ENCODE measurements at regions of chr5 and their contacts with region 1.

Region 1: GRCh38 chr5:137629646-137630045 is 106.2 kb downstream of the KLHL3 start:
- DNase-seq: peak in 2 of 5 donors; percentile 32 to 44
- H3K4me3 ChIP-seq: no peak overlapping the region
- H3K4me3 Mint-ChIP-seq: no peak overlapping the region
- H3K27ac ChIP-seq: no peak overlapping the region
- H3K27ac Mint-ChIP-seq: peak overlapping the region in 1 of 8 donors; percentile 39
- H3K4me1 ChIP-seq: no peaks in the 10 kb centered on the region
- H3K4me1 Mint-ChIP-seq: no peaks in the 10 kb centered on the region
- H3K27me3 ChIP-seq: no peaks in the 10 kb centered on the region
- H3K27me3 Mint-ChIP-seq: no peaks in the 10 kb centered on the region

Region 2: GRCh38 chr5:137641148-137641547 is 11.5 kb after region 1 on chr5:
- CTCF ChIA-PET with region 1: interaction called, 17 read pairs
- POLR2A ChIA-PET with region 1: interaction called, 3 read pairs
- DNase-seq: no peak
- H3K4me3 ChIP-seq: no peak overlapping the region
- H3K4me3 Mint-ChIP-seq: no peak overlapping the region
- H3K27ac ChIP-seq: no peak overlapping the region
- H3K27ac Mint-ChIP-seq: peak overlapping the region in 1 of 8 donors; percentile 87
- H3K4me1 ChIP-seq: no peaks in the 10 kb centered on the region
- H3K4me1 Mint-ChIP-seq: no peaks in the 10 kb centered on the region
- H3K27me3 ChIP-seq: no peaks in the 10 kb centered on the region
- H3K27me3 Mint-ChIP-seq: no peaks in the 10 kb centered on the region

Region 3: DNA sequence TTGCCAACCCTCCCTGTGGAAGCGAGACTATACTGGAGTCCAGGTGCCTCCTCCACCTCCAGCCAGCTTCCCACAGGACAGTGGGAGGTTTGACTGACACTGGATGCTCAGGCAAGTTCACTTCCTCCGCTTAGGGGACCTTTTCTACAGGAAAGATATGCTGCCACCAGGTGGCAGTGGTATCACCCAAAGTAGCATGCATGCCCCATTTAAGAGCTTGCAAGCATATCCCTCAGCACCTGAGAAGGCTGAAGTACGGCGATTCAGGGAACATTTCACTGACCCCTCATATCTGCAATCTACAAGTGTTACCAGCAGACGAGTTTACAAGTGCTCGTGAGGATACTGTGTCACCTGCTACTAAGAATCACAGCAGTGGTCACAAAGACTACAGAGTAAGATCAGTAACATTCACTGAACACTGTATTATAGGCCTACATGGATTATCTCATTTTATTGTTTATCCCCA is 30.7 kb after region 1 on chr5:
- CTCF ChIA-PET with region 1: interaction called, 10 read pairs
- POLR2A ChIA-PET with region 1: no interaction called
- DNase-seq: peak; percentile 46 to 76 (median 47)
- H3K4me3 ChIP-seq: no peak overlapping the region
- H3K4me3 Mint-ChIP-seq: no peak overlapping the region
- H3K27ac ChIP-seq: no peak overlapping the region
- H3K27ac Mint-ChIP-seq: no peak overlapping the region
- H3K4me1 ChIP-seq: no peaks in the 10 kb centered on the region
- H3K4me1 Mint-ChIP-seq: peaks cover 3 to 7% (median 7%) of the 10 kb centered on the region in 3 donors
- H3K27me3 ChIP-seq: no peaks in the 10 kb centered on the region
- H3K27me3 Mint-ChIP-seq: no peaks in the 10 kb centered on the region

Region 4: DNA sequence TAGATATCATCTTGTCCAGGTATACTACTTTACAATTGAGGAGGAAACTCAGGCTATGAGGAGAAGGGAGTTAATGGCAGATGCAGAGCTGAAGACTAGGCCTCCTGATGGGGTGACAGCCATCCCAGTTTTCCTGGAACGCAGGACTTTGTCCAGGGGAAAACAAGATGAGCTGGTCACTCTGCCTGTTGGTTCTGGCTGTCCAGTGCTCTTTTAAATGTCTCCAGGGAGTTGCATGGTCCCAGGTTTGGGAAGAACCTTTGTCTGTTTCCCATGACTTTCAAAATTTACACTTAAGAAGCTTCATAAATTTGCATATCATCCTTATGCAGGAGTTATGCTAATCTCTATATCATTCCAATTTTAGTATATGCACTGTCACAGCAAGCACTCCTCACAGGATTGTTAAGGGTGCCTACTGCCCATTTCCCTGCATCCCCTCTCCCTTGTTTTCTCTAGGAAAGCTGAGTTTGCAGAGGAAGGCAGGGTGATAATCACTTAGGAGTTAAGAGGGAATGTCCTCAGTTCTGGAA is 439.5 kb after region 1 on chr5:
- CTCF ChIA-PET with region 1: interaction called, 16 read pairs
- POLR2A ChIA-PET with region 1: no interaction called
- DNase-seq: no peak
- H3K4me3 ChIP-seq: no peak overlapping the region
- H3K4me3 Mint-ChIP-seq: no peak overlapping the region
- H3K27ac ChIP-seq: no peak overlapping the region
- H3K27ac Mint-ChIP-seq: no peak overlapping the region
- H3K4me1 ChIP-seq: no peaks in the 10 kb centered on the region
- H3K4me1 Mint-ChIP-seq: peaks cover 5 to 6% (median 6%) of the 10 kb centered on the region in 3 donors
- H3K27me3 ChIP-seq: no peaks in the 10 kb centered on the region
- H3K27me3 Mint-ChIP-seq: no peaks in the 10 kb centered on the region